K562 (cell line): ENCODE measurements at regions of chrX and their contacts with region 1.

Region 1: DNA sequence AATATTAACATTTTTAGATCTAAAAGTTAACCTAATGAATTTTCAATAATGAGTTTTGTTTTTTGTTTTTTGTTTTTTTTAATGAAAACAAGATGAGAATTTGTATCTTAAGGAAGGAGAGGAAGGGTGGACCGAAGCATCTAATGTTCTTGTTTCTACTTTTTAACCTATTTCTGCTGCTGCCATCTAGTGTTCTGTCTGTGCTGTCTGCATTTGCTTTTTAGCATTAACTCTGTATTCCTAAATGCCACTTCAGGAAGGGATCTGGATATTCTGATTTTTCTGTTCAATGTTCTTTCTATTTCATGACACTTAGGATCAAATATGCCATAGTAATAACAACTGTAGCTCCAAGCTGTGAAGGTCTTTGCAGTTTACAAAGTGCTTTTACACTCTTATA is 161.7 kb downstream of the BRWD3 start:
- DNase-seq: peak in 2 of 4 experiments; percentile 5 to 16
- ATAC-seq: no peak
- H3K4me3 ChIP-seq: no peak overlapping the region
- H3K27ac ChIP-seq: no peak overlapping the region
- H3K4me1 ChIP-seq: no peaks in the 10 kb centered on the region
- H3K27me3 ChIP-seq: no peaks in the 10 kb centered on the region
- CTCF ChIP-seq: peak in 2 of 3 experiments; percentile 25 to 40; a peak in 3 of 6 replicates
- EP300 ChIP-seq: no peak
- POLR2A ChIP-seq: no peak
- RAD21 ChIP-seq: peak in 1 of 2 experiments; percentile 55; a peak in 2 of 4 replicates

Region 2: DNA sequence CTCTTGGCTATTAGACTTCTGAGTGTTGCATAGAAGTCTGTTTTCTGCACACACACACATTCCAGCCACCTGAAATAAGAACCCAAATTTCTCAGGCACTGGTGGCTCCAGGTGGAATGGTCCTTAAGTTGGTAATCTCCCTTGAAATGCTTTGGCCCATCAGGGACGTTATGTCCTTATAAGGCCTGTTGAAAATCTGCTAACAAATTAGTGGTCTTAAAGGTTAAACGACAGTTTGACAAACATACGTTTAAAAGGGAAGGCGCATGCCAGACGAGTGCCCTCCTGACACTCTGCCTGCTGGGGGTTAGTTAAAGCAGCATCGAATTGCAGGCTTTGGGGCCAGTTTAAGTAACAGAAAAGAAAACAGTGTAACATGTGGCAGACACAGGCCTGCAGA is 508.5 kb before region 1 on chrX:
- CTCF ChIA-PET with region 1: no interaction called
- POLR2A ChIA-PET with region 1: no interaction called
- in situ Hi-C with region 1: no loop called
- intact Hi-C with region 1: no loop called
- DNase-seq: no peak
- ATAC-seq: no peak
- H3K4me3 ChIP-seq: no peak overlapping the region
- H3K27ac ChIP-seq: no peak overlapping the region
- H3K4me1 ChIP-seq: no peaks in the 10 kb centered on the region
- H3K27me3 ChIP-seq: no peaks in the 10 kb centered on the region
- CTCF ChIP-seq: no peak
- EP300 ChIP-seq: no peak
- POLR2A ChIP-seq: no peak
- RAD21 ChIP-seq: no peak

Region 3: GRCh38 chrX:80237072-80237471 is 411.0 kb before region 1 on chrX:
- CTCF ChIA-PET with region 1: no interaction called
- POLR2A ChIA-PET with region 1: no interaction called
- in situ Hi-C with region 1: no loop called
- intact Hi-C with region 1: loop called (anchors 10 kb)
- DNase-seq: peak in 3 of 4 experiments; percentile 7 to 37 (median 11)
- ATAC-seq: no peak
- H3K4me3 ChIP-seq: no peak overlapping the region
- H3K27ac ChIP-seq: no peak overlapping the region
- H3K4me1 ChIP-seq: no peaks in the 10 kb centered on the region
- H3K27me3 ChIP-seq: no peaks in the 10 kb centered on the region
- CTCF ChIP-seq: peak in 2 of 3 experiments; percentile 34 to 35; a peak in 3 of 6 replicates
- EP300 ChIP-seq: no peak
- POLR2A ChIP-seq: no peak
- RAD21 ChIP-seq: peak in 1 of 2 experiments; percentile 23; a peak in 1 of 4 replicates

Region 4: GRCh38 chrX:80285131-80285773 is 362.8 kb before region 1 on chrX:
- CTCF ChIA-PET with region 1: no interaction called
- POLR2A ChIA-PET with region 1: no interaction called
- in situ Hi-C with region 1: no loop called
- intact Hi-C with region 1: loop called (anchors 5 kb)
- DNase-seq: peak in 3 of 4 experiments; percentile 4 to 38 (median 6)
- ATAC-seq: peak; percentile 85
- H3K4me3 ChIP-seq: no peak overlapping the region
- H3K27ac ChIP-seq: no peak overlapping the region
- H3K4me1 ChIP-seq: no peaks in the 10 kb centered on the region
- H3K27me3 ChIP-seq: no peaks in the 10 kb centered on the region
- CTCF ChIP-seq: peak; percentile 36 to 48 (median 41); a peak in 4 of 6 replicates
- EP300 ChIP-seq: no peak
- POLR2A ChIP-seq: no peak
- RAD21 ChIP-seq: peak in 1 of 2 experiments; percentile 45; a peak in 1 of 4 replicates